ENCODE measurements at regions of chr7 and their contacts with region 1.

Region 1: GRCh38 chr7:24971333-24972165 is 8.4 kb downstream of the OSBPL3 start:
- DNase-seq: peak; percentile 85
- H3K4me3 Mint-ChIP-seq: peak overlapping the region; percentile 38
- H3K27ac Mint-ChIP-seq: peak overlapping the region; percentile 99
- H3K4me1 Mint-ChIP-seq: peaks cover 62% of the 10 kb centered on the region
- H3K27me3 Mint-ChIP-seq: no peaks in the 10 kb centered on the region
- CTCF ChIP-seq: no peak

Region 2: GRCh38 chr7:24366876-24367275 is 604.7 kb before region 1 on chr7:
- CTCF ChIA-PET with region 1: no interaction called
- POLR2A ChIA-PET with region 1: no interaction called
- intact Hi-C with region 1: no loop called
- DNase-seq: no peak
- H3K4me3 Mint-ChIP-seq: no peak overlapping the region
- H3K27ac Mint-ChIP-seq: no peak overlapping the region
- H3K4me1 Mint-ChIP-seq: no peaks in the 10 kb centered on the region
- H3K27me3 Mint-ChIP-seq: peaks cover 5% of the 10 kb centered on the region
- CTCF ChIP-seq: no peak

Region 3: GRCh38 chr7:24572997-24573625 is 398.4 kb before region 1 on chr7 and contains the start of gene PALS2:
- CTCF ChIA-PET with region 1: no interaction called
- POLR2A ChIA-PET with region 1: no interaction called
- intact Hi-C with region 1: no loop called
- DNase-seq: peak; percentile 73
- H3K4me3 Mint-ChIP-seq: peak within 1 kb of the TSS; percentile 99
- H3K27ac Mint-ChIP-seq: peak within 1 kb of the TSS; percentile 95
- H3K4me1 Mint-ChIP-seq: peaks cover 19% of the 10 kb centered on the region
- H3K27me3 Mint-ChIP-seq: peaks cover 28% of the 10 kb centered on the region
- CTCF ChIP-seq: no peak
- total RNA-seq, gene PALS2: 36.3 and 45.9 TPM in 2 replicates

Region 4: DNA sequence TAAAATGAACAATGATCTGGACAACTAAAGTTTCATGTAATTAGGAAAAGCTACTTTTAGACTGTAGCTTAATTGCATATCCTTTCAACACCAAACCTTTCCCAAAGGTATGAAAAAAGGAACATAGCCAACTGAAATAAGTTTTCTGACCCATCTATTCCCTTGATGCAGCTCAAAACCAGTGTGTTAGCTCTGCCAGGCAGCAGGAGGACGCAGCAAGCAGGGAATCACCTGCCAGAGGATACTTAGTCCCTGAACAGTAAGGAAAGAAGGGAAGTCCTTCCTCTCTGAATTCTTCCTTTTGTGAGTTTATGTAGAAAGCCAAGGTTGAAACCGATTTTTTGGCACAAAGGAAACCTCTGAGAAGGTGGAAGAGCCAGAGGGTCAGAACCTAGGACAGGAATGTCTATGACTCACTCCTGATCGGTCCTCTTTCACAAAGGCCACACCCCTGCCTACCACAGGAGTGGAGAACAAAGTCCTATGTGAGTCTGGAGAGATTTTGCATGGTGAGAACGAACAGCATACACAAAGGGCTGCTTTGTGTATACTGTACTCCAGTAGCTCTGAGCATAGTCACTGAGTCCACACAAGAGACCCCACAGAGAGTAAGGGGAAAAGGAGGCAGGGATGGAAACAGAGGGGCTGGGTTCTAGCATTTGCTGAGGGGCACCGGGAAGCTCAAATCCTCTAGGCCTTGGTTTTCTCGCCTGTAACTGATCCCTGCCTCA is 145.5 kb before region 1 on chr7:
- CTCF ChIA-PET with region 1: interaction called, 104 read pairs
- POLR2A ChIA-PET with region 1: interaction called, 163 read pairs
- intact Hi-C with region 1: loop called (anchors 2 kb)
- DNase-seq: peak; percentile 94
- H3K4me3 Mint-ChIP-seq: peak overlapping the region; percentile 54
- H3K27ac Mint-ChIP-seq: peak overlapping the region; percentile 88
- H3K4me1 Mint-ChIP-seq: peaks cover 62% of the 10 kb centered on the region
- H3K27me3 Mint-ChIP-seq: no peaks in the 10 kb centered on the region
- CTCF ChIP-seq: no peak

Region 5: DNA sequence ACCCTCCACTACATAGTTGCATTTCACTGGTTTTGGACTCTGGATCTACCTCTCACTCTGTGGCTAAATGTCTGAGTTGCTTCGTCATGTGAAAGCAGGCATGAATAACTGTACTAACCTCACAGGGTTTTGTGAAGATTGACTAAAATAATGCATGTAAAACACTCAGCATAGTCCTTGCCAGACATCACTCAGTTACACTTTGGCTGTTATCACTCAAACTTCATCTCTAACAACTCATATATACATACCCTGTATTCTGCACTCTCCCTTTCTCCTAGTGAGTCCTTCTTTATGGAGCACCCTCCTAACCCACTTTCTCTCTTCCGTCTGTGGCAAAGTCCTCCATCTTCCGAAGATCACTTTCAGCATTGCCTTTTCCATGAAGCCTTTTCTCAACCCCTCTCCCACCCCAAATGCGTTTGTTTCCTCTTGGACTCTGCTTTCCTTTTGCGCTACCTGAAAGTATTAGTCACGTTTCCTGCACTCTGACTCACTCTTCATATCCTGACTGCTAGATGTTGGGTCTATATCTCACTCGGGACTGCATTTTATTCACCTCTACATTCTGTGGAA is 64.2 kb before region 1 on chr7:
- CTCF ChIA-PET with region 1: interaction called, 3 read pairs
- POLR2A ChIA-PET with region 1: interaction called, 11 read pairs
- intact Hi-C with region 1: no loop called
- DNase-seq: peak; percentile 89
- H3K4me3 Mint-ChIP-seq: no peak overlapping the region
- H3K27ac Mint-ChIP-seq: no peak overlapping the region
- H3K4me1 Mint-ChIP-seq: peaks cover 43% of the 10 kb centered on the region
- H3K27me3 Mint-ChIP-seq: no peaks in the 10 kb centered on the region
- CTCF ChIP-seq: no peak

Region 6: GRCh38 chr7:24926623-24927524 is 44.7 kb before region 1 on chr7:
- CTCF ChIA-PET with region 1: interaction called, 4 read pairs
- POLR2A ChIA-PET with region 1: interaction called, 4 read pairs
- intact Hi-C with region 1: loop called (anchors 5 kb)
- DNase-seq: no peak
- H3K4me3 Mint-ChIP-seq: peak overlapping the region; percentile 8
- H3K27ac Mint-ChIP-seq: peak overlapping the region; percentile 50
- H3K4me1 Mint-ChIP-seq: peaks cover 38% of the 10 kb centered on the region
- H3K27me3 Mint-ChIP-seq: no peaks in the 10 kb centered on the region
- CTCF ChIP-seq: no peak

Region 7: GRCh38 chr7:24956021-24956420 is 15.5 kb before region 1 on chr7:
- CTCF ChIA-PET with region 1: interaction called, 5 read pairs
- POLR2A ChIA-PET with region 1: interaction called, 161 read pairs
- intact Hi-C with region 1: loop called (anchors 1 kb)
- DNase-seq: peak; percentile 88
- H3K4me3 Mint-ChIP-seq: peak overlapping the region; percentile 10
- H3K27ac Mint-ChIP-seq: peak overlapping the region; percentile 65
- H3K4me1 Mint-ChIP-seq: peaks cover 29% of the 10 kb centered on the region
- H3K27me3 Mint-ChIP-seq: no peaks in the 10 kb centered on the region
- CTCF ChIP-seq: no peak

Region 8: DNA sequence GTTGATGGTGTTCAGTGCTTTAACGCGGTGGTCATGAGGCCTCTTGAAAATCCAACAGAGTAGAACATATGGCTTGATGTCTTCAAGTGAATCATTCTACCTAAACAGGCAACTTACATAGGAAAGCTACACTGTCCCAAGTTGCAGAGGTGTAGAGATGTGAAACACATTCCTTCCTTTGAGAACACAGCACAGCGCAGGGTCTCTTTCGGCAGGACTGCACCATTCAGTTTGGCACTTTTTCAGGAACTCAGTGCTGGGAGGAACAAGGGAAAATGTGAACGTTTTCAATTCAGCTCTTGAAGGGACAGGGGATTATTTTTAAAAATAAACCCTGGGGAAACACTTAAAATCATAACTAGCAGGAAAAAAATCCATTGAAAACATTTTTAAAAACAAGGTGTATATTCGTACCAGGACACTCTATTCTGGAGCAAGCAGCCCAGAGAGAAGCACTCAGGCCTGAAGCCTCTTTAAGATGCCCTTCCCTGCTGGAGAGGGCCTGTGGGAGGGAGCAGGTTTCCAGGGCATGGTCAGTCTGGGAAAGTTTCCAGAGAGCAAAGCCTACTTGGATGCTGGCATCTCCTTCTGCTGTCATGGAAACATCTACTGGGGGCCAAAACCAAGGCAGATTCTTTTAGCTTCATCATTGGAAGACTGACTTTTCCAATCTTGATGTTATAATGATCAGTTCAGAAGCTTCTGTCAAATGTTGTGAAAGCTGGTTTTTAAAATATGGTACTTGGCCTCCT is 317.2 kb after region 1 on chr7:
- CTCF ChIA-PET with region 1: no interaction called
- POLR2A ChIA-PET with region 1: no interaction called
- intact Hi-C with region 1: no loop called
- DNase-seq: no peak
- H3K4me3 Mint-ChIP-seq: no peak overlapping the region
- H3K27ac Mint-ChIP-seq: no peak overlapping the region
- H3K4me1 Mint-ChIP-seq: no peaks in the 10 kb centered on the region
- H3K27me3 Mint-ChIP-seq: peaks cover 70% of the 10 kb centered on the region
- CTCF ChIP-seq: no peak